H1 (cell line): ENCODE measurements at regions of chr11 and their contacts with region 1.

Region 1: GRCh38 chr11:15159085-15159484 is 44.4 kb downstream of the INSC start:
- DNase-seq: no peak
- H3K4me3 ChIP-seq: no peak overlapping the region
- H3K27ac ChIP-seq: no peak overlapping the region
- H3K4me1 ChIP-seq: no peaks in the 10 kb centered on the region
- H3K27me3 ChIP-seq: no peaks in the 10 kb centered on the region
- CTCF ChIP-seq: peak; percentile 15 to 73 (median 69)
- EP300 ChIP-seq: no peak
- POLR2A ChIP-seq: no peak
- RAD21 ChIP-seq: peak; percentile 78 to 80

Region 2: GRCh38 chr11:15093432-15093831 is 65.7 kb before region 1 on chr11:
- CTCF ChIA-PET with region 1: interaction called, 81 read pairs
- POLR2A ChIA-PET with region 1: no interaction called
- DNase-seq: no peak
- H3K4me3 ChIP-seq: no peak overlapping the region
- H3K27ac ChIP-seq: no peak overlapping the region
- H3K4me1 ChIP-seq: no peaks in the 10 kb centered on the region; a peak in 1 of 7 replicates
- H3K27me3 ChIP-seq: no peaks in the 10 kb centered on the region
- CTCF ChIP-seq: no peak
- EP300 ChIP-seq: no peak
- POLR2A ChIP-seq: no peak
- RAD21 ChIP-seq: no peak

Region 3: GRCh38 chr11:15107730-15108515 is 51.2 kb before region 1 on chr11:
- CTCF ChIA-PET with region 1: interaction called, 81 read pairs
- POLR2A ChIA-PET with region 1: no interaction called
- DNase-seq: no peak
- H3K4me3 ChIP-seq: no peak overlapping the region
- H3K27ac ChIP-seq: no peak overlapping the region
- H3K4me1 ChIP-seq: no peaks in the 10 kb centered on the region
- H3K27me3 ChIP-seq: no peaks in the 10 kb centered on the region
- CTCF ChIP-seq: no peak
- EP300 ChIP-seq: no peak
- POLR2A ChIP-seq: no peak
- RAD21 ChIP-seq: no peak

Region 4: GRCh38 chr11:15146271-15147003 is 12.6 kb before region 1 on chr11:
- CTCF ChIA-PET with region 1: interaction called, 107 read pairs
- POLR2A ChIA-PET with region 1: interaction called, 3 read pairs
- DNase-seq: no peak
- H3K4me3 ChIP-seq: no peak overlapping the region
- H3K27ac ChIP-seq: no peak overlapping the region
- H3K4me1 ChIP-seq: peaks cover 0 to 7% (median 3%) of the 10 kb centered on the region in 4 experiments; a peak in 3 of 7 replicates
- H3K27me3 ChIP-seq: no peaks in the 10 kb centered on the region
- CTCF ChIP-seq: no peak
- EP300 ChIP-seq: no peak
- POLR2A ChIP-seq: no peak
- RAD21 ChIP-seq: no peak

Region 5: DNA sequence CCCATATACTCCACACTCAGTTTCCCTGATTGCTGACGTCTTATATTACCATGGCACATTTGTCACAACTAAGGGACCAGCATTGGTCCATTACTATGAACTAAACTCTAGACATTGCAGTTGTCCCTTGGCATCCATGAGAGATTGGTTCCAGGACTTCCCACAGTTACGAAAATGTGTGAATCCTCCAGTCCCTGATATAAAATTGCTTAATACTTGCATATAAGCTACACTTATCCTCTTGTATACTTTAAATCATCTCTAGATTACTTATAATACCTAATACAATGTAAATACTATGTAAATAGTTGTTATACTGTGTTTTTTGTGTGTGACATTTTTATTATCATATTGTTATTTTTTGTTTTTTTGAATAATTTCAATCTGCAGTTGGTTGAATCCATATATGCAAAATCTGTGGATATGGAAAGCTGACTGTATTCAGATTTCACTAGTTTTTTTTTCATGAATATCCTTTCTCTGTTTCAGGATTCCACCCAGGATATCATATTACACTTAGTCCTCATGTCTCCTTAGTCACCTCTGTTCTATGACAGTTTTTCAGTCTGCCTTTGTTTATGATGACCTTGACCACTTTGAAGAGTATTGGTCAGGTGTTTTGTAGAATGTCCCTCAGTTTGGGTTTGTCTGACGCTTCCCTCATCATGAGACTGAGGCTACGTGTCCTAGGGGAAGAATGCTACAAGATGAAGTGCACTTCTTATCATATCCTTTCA is 10.9 kb after region 1 on chr11:
- CTCF ChIA-PET with region 1: interaction called, 42 read pairs
- POLR2A ChIA-PET with region 1: no interaction called
- DNase-seq: no peak
- H3K4me3 ChIP-seq: no peak overlapping the region
- H3K27ac ChIP-seq: no peak overlapping the region
- H3K4me1 ChIP-seq: no peaks in the 10 kb centered on the region
- H3K27me3 ChIP-seq: no peaks in the 10 kb centered on the region
- CTCF ChIP-seq: no peak
- EP300 ChIP-seq: no peak
- POLR2A ChIP-seq: no peak
- RAD21 ChIP-seq: no peak

Region 6: DNA sequence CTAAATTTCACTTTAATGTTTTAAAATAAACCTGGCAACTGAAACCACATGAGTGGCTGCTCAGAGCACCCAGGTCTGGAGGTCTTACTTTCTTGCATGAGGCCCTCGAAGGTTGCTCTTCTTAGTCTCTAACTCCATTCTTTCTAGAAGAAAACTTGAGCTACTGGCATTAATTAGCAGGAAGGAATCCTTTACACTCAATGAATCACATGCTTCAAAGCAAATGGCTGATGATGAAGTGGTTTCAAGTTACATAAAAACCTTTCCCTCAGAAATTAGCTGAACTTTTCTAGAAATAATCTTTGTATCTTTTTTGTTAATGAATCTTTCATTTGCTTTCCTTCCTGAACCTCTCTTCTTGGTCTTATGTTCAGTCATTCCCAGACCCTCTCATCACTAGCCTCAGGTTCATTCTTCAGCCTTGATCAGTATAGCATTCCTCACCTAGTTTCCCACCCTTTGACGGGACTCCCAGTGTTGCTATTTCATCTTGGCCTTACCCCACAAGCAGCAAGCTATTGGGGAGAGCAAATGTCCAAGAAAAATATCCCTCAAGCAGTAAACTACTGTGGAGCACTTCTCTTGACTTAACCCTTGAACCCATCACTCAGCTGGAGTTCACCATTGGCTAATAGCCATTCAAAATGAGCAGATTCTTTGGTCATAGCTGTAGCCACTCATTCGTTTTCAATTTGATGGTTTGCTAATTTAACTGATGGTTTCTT is 30.7 kb after region 1 on chr11:
- CTCF ChIA-PET with region 1: interaction called, 13 read pairs
- POLR2A ChIA-PET with region 1: no interaction called
- DNase-seq: no peak
- H3K4me3 ChIP-seq: no peak overlapping the region
- H3K27ac ChIP-seq: no peak overlapping the region
- H3K4me1 ChIP-seq: 0 out of 7 replicates have a peak, but pooled peaks cover 0 to 2% (median 0%) of the 10 kb centered on the region in 4 experiments
- H3K27me3 ChIP-seq: no peaks in the 10 kb centered on the region
- CTCF ChIP-seq: no peak
- EP300 ChIP-seq: no peak
- POLR2A ChIP-seq: no peak
- RAD21 ChIP-seq: no peak

Region 7: DNA sequence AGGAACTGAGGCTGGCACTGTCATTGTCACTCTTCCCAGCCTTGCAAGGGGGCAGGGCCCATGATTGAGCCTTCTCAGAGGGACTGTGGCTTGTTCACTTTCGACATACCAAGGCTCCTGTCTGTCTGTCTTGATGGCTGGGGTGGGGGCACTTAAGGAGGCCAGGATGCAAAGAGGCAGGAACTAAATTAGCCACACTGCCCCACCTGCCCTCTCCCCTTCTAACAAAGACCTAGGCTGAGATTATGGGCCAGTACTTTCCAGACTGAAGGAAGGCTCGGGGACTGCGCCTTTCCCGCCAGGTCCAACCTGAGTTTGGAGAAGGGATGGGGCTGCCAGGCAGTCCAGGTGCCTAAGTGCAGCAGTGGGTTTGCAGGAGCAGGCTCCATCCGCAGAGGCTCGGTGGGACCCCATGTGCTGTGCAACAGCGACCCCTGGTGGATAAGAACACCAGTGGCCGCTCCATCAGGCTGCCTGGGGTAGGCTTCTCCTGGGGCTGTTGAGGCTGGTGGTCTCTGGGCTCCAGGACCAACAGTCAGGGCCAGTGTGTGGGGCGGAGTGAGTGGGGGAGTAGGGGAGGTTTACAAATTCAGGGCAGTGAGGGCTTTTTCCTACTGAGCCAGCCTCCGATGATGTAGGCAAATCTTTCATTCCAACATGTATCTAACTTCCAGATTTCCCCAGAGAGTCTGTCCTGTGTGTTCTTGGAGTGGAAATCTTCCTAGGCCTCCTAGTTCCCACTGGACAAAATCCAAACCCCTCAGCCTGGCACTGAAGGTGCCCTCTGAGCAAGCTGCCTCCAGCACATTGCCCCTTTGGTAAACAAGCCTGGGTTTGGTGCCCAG is 49.5 kb after region 1 on chr11:
- CTCF ChIA-PET with region 1: interaction called, 27 read pairs
- POLR2A ChIA-PET with region 1: no interaction called
- DNase-seq: peak; percentile 59 to 92
- H3K4me3 ChIP-seq: no peak overlapping the region
- H3K27ac ChIP-seq: no peak overlapping the region
- H3K4me1 ChIP-seq: peaks cover 0 to 2% (median 0%) of the 10 kb centered on the region in 4 experiments; a peak in 1 of 7 replicates
- H3K27me3 ChIP-seq: no peaks in the 10 kb centered on the region; a peak in 1 of 7 replicates
- CTCF ChIP-seq: peak; percentile 95 to 97 (median 95)
- EP300 ChIP-seq: no peak
- POLR2A ChIP-seq: no peak
- RAD21 ChIP-seq: peak; percentile 99 to 100